Activated CD4-positive, alpha-beta T cell treated with anti-CD3 and anti-CD28 coated beads, Interleukin-2, amount 10 ng/mL, durations not matched to agents 24 days and 14 days (primary cell): ENCODE measurements at regions of chr7 and their contacts with region 1.

Region 1: DNA sequence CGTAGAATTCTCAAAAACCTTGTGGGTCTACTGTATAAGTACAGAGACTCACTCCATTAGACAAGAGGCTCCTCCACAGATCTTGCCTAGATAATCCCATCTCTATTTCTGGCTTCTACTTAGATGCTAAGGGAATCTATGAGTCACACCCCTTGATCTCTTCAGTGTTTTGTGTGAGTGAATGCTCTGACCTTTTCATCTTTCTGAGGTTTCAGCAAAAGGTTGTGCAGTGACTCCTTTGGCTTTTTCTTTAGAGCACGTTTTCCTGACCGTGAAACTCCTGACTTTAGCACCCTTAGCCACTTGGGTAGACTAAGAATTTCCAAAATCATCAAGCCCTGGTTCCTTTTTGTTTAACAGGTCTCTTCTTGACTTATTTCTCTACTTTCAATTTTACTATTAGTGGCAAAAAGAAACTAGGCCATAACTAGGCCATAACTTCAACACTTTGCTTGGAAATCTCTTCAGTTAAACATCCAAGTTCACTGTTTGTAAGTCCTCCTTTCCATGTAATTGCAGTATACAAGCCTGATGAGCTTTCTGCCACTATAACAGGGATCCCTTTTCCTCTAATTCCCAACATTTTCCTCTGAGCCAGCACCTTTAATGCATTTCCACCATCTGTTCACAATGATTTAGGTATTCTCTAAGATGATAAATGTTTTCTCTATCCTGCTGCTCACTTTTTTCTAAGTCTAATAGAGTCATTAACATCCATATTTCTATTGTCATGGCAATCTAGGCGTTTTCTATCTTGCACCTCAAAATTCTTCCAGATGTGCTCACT is 19.4 kb downstream of the COPG2 start:
- DNase-seq: peak; percentile 67
- H3K4me3 Mint-ChIP-seq: peak overlapping the region; percentile 50
- H3K27ac Mint-ChIP-seq: peak overlapping the region; percentile 86
- H3K4me1 Mint-ChIP-seq: peaks cover 35% of the 10 kb centered on the region
- H3K27me3 Mint-ChIP-seq: no peaks in the 10 kb centered on the region

Region 2: GRCh38 chr7:130182990-130183389 is 466.2 kb before region 1 on chr7:
- intact Hi-C with region 1: loop called (anchors 1 kb)
- DNase-seq: no peak
- H3K4me3 Mint-ChIP-seq: no peak overlapping the region
- H3K27ac Mint-ChIP-seq: peak overlapping the region; percentile 78
- H3K4me1 Mint-ChIP-seq: peaks cover 20% of the 10 kb centered on the region
- H3K27me3 Mint-ChIP-seq: no peaks in the 10 kb centered on the region

Region 3: GRCh38 chr7:130421684-130422083 is 227.5 kb before region 1 on chr7:
- intact Hi-C with region 1: loop called (anchors 2 kb)
- DNase-seq: no peak
- H3K4me3 Mint-ChIP-seq: peak overlapping the region; percentile 36
- H3K27ac Mint-ChIP-seq: peak overlapping the region; percentile 43
- H3K4me1 Mint-ChIP-seq: peaks cover 38% of the 10 kb centered on the region
- H3K27me3 Mint-ChIP-seq: no peaks in the 10 kb centered on the region

Region 4: GRCh38 chr7:130566168-130566897 is 82.9 kb before region 1 on chr7:
- intact Hi-C with region 1: no loop called
- DNase-seq: no peak
- H3K4me3 Mint-ChIP-seq: no peak overlapping the region
- H3K27ac Mint-ChIP-seq: no peak overlapping the region
- H3K4me1 Mint-ChIP-seq: peaks cover 10% of the 10 kb centered on the region
- H3K27me3 Mint-ChIP-seq: no peaks in the 10 kb centered on the region

Region 5: DNA sequence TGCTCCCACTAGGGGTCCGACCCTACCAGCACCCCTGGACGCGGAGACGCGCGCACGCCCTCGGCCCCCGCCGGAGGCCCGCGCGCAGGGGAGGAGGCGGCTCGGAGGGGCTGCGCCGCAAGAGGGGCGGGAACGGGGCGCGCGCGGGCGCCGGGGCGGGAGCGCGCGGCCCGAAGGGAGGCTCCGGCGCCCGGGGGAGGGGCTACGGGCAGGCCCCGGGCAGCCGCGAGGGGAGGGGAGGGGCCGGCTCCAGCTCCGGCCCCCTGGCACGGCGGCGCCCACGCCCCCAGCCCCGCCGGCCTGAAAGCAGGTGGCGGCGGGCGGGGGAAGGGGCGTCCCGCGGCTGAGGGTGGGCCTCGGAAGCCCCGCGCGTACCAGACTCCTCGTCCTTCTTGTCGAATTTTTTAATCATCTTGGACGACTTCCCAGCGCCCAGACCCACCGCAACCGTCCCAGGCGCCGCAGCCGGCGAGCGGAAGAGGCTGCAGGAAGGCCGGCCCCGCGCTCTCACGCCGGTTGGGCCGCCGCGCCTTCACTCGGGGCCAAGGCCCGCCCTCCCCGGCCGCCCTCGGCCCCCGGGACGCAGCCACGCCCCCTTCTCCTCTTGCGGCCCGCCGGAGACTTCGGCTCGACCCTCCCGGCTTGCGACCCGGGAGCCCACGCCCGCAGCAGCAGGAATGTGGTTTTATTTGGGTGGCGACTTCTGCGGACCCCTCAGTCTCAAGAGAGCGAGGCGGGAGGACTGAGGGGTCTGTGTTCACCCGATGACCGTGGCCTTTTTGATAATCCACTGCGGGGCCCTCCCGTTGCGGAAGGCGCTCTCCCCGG is 19.3 kb after region 1 on chr7 and contains the start of gene COPG2:
- intact Hi-C with region 1: loop called (anchors 1 kb)
- DNase-seq: peak; percentile 95
- H3K4me3 Mint-ChIP-seq: peak within 1 kb of the TSS; percentile 85
- H3K27ac Mint-ChIP-seq: peak within 1 kb of the TSS; percentile 84
- H3K4me1 Mint-ChIP-seq: peaks cover 19% of the 10 kb centered on the region
- H3K27me3 Mint-ChIP-seq: peaks cover 12% of the 10 kb centered on the region
- total RNA-seq, gene COPG2: 21.4 and 22.5 TPM in 2 replicates

Region 6: DNA sequence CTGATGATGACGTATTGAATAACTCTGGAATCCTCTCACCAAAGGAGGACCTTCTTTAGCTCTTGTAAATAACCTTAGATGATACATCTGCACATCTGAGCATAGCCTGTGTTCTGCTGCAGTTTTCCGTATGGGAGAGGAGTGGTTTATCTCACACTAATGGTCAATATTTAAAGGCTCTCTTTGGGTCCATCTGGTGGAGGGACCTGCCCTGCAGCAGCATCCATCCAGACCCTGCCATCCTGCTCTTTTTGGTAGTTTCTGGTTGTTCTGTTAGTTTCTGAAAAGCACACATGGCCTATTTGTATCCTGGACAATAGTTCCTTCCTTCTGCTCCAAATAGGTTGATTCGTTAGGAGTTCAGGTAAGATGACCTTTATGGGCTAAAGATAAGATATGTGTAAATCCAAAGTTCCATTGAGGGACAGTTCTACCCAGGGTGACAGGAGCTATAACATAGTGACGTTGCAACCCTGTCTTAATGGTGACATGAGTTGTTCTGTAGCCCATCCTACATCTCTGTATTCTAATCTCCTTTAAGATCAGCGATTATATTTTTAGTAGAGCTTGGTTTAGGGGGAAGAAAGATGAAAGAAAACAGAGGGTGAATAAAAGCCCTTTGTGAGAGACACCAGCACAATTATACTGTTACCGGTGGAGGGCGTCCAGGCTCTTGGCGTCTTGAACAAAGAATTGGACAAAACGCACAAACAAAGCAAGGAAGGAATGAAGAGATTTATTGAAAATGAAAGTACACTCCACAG is 144.8 kb after region 1 on chr7:
- intact Hi-C with region 1: no loop called
- DNase-seq: no peak
- H3K4me3 Mint-ChIP-seq: no peak overlapping the region
- H3K27ac Mint-ChIP-seq: no peak overlapping the region
- H3K4me1 Mint-ChIP-seq: no peaks in the 10 kb centered on the region
- H3K27me3 Mint-ChIP-seq: peaks cover 20% of the 10 kb centered on the region